Activated CD8-positive, alpha-beta T cell treated with anti-CD3 and anti-CD28 coated beads for 36 hours (primary cell): ENCODE measurements at regions of chr20 and their contacts with region 1.

Region 1: DNA sequence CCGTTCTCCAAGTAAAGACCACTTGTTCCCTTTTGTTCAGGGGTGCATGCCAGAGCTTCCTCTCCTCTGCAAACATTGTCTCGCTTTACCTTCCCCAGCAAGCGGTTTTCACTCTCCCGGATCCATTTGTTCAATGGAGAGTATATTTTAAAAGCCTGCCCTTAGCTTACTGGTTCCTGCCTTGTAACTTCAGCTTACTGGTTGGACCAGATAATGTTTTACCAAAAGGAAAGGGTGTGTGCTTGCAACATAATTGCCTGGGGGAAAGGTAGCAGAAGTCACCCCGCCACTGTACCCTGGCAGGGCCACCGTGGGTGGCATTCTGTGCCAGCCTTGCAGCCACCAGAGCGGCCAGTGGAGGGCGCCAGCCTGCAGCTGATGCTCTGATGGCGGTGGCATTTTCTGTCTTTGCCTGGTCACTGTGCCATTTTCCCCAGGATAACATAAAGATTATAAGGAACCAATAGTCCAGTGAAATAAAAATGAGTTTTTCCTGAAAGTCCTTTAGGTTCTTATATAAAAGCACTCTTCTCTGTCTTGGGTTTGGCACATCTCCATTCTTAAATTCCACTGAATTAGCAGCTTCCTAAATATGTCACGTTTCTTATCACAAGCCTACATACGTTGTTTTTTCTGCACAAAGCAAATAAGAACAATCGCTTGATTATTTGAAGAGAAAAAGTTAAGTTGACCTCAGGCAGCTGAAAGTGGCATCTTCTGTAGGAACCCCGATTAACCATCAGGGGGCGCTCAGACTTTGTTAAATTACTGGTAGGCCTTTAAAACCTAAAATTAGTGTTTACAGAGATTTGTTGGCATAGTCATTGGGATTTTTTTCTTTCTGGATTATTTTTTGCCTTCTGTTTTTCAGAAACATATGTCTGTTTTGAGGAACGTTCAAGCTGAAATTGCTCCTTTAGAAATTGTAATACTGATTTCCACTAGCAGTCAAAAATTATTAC is 67.4 kb upstream of the XRN2 start:
- DNase-seq: peak; percentile 81
- ATAC-seq: peak; percentile 84
- H3K4me3 Mint-ChIP-seq: no peak overlapping the region
- H3K27ac Mint-ChIP-seq: no peak overlapping the region
- H3K4me1 Mint-ChIP-seq: peaks cover 4% of the 10 kb centered on the region
- H3K27me3 Mint-ChIP-seq: no peaks in the 10 kb centered on the region
- CTCF ChIP-seq: peak; percentile 98

Region 2: GRCh38 chr20:21048841-21049273 is 186.9 kb before region 1 on chr20:
- CTCF ChIA-PET with region 1: interaction called, 12 read pairs
- POLR2A ChIA-PET with region 1: no interaction called
- intact Hi-C with region 1: no loop called
- DNase-seq: peak; percentile 62
- ATAC-seq: peak; percentile 55
- H3K4me3 Mint-ChIP-seq: no peak overlapping the region
- H3K27ac Mint-ChIP-seq: no peak overlapping the region
- H3K4me1 Mint-ChIP-seq: no peaks in the 10 kb centered on the region
- H3K27me3 Mint-ChIP-seq: peaks cover 12% of the 10 kb centered on the region
- CTCF ChIP-seq: peak; percentile 88

Region 3: GRCh38 chr20:21133404-21133803 is 102.4 kb before region 1 on chr20:
- CTCF ChIA-PET with region 1: no interaction called
- POLR2A ChIA-PET with region 1: no interaction called
- intact Hi-C with region 1: no loop called
- DNase-seq: no peak
- ATAC-seq: no peak
- H3K4me3 Mint-ChIP-seq: no peak overlapping the region
- H3K27ac Mint-ChIP-seq: no peak overlapping the region
- H3K4me1 Mint-ChIP-seq: peaks cover 3% of the 10 kb centered on the region
- H3K27me3 Mint-ChIP-seq: no peaks in the 10 kb centered on the region
- CTCF ChIP-seq: no peak

Region 4: GRCh38 chr20:21251278-21251677 is 15.5 kb after region 1 on chr20:
- CTCF ChIA-PET with region 1: interaction called, 22 read pairs
- POLR2A ChIA-PET with region 1: no interaction called
- intact Hi-C with region 1: no loop called
- DNase-seq: peak; percentile 17
- ATAC-seq: peak; percentile 90
- H3K4me3 Mint-ChIP-seq: no peak overlapping the region
- H3K27ac Mint-ChIP-seq: no peak overlapping the region
- H3K4me1 Mint-ChIP-seq: peaks cover 14% of the 10 kb centered on the region
- H3K27me3 Mint-ChIP-seq: peaks cover 1% of the 10 kb centered on the region
- CTCF ChIP-seq: no peak

Region 5: GRCh38 chr20:21352703-21353102 is 116.9 kb after region 1 on chr20:
- CTCF ChIA-PET with region 1: interaction called, 17 read pairs
- POLR2A ChIA-PET with region 1: no interaction called
- intact Hi-C with region 1: no loop called
- DNase-seq: no peak
- ATAC-seq: no peak
- H3K4me3 Mint-ChIP-seq: no peak overlapping the region
- H3K27ac Mint-ChIP-seq: no peak overlapping the region
- H3K4me1 Mint-ChIP-seq: no peaks in the 10 kb centered on the region
- H3K27me3 Mint-ChIP-seq: no peaks in the 10 kb centered on the region
- CTCF ChIP-seq: no peak

Region 6: DNA sequence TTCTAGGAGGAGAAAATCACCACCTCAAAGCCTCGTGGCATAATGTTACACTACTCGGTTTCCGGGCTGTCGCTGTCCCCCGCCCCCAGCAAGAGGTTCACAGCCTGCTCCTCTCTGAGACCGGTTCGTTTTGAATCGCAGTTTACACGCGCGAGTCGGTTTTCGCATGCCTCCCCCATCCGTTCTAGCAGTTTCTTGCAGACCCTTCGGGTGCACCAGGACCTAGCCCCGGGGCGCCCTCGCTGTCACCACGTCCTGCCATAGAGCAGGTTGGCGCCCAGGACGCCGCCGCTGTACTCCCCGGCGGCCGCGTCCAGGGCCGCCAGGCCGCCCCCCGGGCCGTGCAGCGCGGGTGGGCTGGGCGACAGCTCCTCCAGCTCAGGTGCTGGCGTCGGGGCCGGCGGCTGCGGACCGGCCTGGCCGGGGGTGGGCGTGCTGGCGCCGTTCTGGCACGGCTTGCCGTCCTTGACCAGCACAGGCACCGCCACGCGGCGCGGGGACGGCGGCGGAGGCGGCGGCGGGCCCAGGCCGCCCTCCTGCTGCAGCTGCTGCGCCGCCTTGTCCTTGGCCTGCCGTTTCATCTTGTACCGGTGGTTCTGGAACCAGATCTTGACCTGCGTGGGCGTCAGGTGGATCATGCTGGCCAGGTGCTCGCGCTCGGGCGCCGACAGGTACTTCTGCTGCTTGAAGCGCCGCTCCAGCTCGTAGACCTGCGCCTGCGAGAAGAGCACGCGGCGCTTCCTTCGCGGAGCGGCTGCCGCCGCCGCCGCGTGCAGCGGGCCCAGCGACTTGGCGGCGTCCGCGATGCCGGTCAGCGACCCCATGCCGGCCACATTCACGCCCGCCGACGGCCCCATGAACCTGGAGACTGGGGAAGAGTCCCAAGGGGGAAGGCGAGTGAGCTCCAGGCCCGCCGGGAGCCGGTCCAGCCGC is 160.2 kb after region 1 on chr20:
- CTCF ChIA-PET with region 1: interaction called, 20 read pairs
- POLR2A ChIA-PET with region 1: no interaction called
- intact Hi-C with region 1: no loop called
- DNase-seq: peak; percentile 68
- ATAC-seq: peak; percentile 77
- H3K4me3 Mint-ChIP-seq: peak overlapping the region; percentile 64
- H3K27ac Mint-ChIP-seq: no peak overlapping the region
- H3K4me1 Mint-ChIP-seq: peaks cover 18% of the 10 kb centered on the region
- H3K27me3 Mint-ChIP-seq: peaks cover 69% of the 10 kb centered on the region
- CTCF ChIP-seq: no peak

Region 7: GRCh38 chr20:21505161-21505809 is 269.5 kb after region 1 on chr20:
- CTCF ChIA-PET with region 1: interaction called, 256 read pairs
- POLR2A ChIA-PET with region 1: interaction called, 5 read pairs
- intact Hi-C with region 1: loop called (anchors 1 kb)
- DNase-seq: peak; percentile 89
- ATAC-seq: peak; percentile 78
- H3K4me3 Mint-ChIP-seq: peak overlapping the region; percentile 53
- H3K27ac Mint-ChIP-seq: no peak overlapping the region
- H3K4me1 Mint-ChIP-seq: peaks cover 15% of the 10 kb centered on the region
- H3K27me3 Mint-ChIP-seq: peaks cover 51% of the 10 kb centered on the region
- CTCF ChIP-seq: peak; percentile 95

Region 8: GRCh38 chr20:21615617-21616080 is 379.9 kb after region 1 on chr20:
- CTCF ChIA-PET with region 1: interaction called, 12 read pairs
- POLR2A ChIA-PET with region 1: no interaction called
- intact Hi-C with region 1: no loop called
- DNase-seq: peak; percentile 61
- ATAC-seq: peak; percentile 65
- H3K4me3 Mint-ChIP-seq: no peak overlapping the region
- H3K27ac Mint-ChIP-seq: no peak overlapping the region
- H3K4me1 Mint-ChIP-seq: no peaks in the 10 kb centered on the region
- H3K27me3 Mint-ChIP-seq: peaks cover 15% of the 10 kb centered on the region
- CTCF ChIP-seq: peak; percentile 55

Region 9: DNA sequence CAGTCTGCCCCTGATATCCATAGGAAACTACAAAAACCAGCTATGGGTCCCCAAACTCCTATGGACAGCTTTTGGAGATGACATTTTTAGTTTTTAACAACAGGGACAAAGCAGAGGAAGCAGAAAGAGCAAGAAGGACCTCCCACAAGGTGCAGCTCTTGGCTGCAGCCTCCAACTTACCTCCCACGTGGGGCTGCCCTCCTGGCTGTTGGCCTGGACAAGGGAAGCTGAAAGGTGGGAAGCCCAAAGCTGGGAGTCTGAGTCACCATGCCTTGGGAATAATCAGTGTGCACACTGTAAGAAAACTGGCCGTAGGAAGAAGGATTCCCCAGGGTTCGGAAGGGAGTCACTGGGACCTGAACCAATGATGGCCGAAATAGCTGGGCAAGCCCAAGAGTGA is 417.9 kb after region 1 on chr20:
- CTCF ChIA-PET with region 1: no interaction called
- POLR2A ChIA-PET with region 1: no interaction called
- intact Hi-C with region 1: no loop called
- DNase-seq: no peak
- ATAC-seq: no peak
- H3K4me3 Mint-ChIP-seq: no peak overlapping the region
- H3K27ac Mint-ChIP-seq: no peak overlapping the region
- H3K4me1 Mint-ChIP-seq: no peaks in the 10 kb centered on the region
- H3K27me3 Mint-ChIP-seq: peaks cover 5% of the 10 kb centered on the region
- CTCF ChIP-seq: no peak